H1 (cell line): ENCODE measurements at regions of chr2 and their contacts with region 1.

Region 1: DNA sequence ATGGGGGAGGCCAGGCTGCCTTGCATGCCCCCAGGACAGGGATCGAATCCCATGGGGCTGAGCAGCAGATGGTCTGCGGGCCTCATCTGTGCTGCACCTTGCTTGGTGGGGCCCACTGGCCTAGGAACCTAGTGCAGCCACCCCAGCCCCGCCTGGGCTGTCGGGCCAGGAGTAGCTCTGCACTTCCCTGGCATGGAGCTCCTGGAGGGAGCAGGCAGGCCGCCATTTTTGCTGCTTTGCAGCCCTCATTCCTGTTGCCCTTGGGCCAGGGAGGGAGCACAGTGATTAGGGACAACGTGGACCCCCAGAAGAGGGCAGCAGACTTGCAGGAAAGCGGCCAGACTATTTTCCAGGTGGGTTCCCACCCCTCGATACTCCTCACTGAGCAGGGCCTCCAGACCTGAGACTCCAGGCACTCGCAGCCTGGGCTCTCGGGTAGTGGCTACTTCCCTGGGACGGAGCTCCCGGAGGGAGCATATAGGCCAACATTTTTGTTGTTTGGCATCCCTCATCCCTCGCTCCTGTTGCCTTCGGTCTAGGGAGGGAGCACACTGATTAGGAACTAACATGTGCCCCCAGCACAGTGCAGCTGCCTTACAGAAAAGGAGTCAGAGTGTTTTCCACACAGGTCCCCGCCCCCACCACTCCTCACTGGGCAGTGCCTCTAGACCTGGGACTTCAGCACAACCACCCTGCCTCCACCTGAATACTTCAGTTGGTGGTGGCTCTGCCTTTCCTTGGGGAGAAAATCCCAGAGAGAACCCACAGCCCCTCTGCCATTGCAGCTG is 99.5 kb downstream of the MAIP1 start:
- DNase-seq: peak; percentile 59 to 83
- H3K4me3 ChIP-seq: no peak overlapping the region
- H3K27ac ChIP-seq: no peak overlapping the region
- H3K4me1 ChIP-seq: peaks cover 0 to 8% (median 0%) of the 10 kb centered on the region in 4 experiments; a peak in 1 of 7 replicates
- H3K27me3 ChIP-seq: no peaks in the 10 kb centered on the region; a peak in 1 of 7 replicates
- CTCF ChIP-seq: peak; percentile 70 to 81 (median 75)
- EP300 ChIP-seq: no peak
- POLR2A ChIP-seq: no peak
- RAD21 ChIP-seq: peak; percentile 92 to 93

Region 2: DNA sequence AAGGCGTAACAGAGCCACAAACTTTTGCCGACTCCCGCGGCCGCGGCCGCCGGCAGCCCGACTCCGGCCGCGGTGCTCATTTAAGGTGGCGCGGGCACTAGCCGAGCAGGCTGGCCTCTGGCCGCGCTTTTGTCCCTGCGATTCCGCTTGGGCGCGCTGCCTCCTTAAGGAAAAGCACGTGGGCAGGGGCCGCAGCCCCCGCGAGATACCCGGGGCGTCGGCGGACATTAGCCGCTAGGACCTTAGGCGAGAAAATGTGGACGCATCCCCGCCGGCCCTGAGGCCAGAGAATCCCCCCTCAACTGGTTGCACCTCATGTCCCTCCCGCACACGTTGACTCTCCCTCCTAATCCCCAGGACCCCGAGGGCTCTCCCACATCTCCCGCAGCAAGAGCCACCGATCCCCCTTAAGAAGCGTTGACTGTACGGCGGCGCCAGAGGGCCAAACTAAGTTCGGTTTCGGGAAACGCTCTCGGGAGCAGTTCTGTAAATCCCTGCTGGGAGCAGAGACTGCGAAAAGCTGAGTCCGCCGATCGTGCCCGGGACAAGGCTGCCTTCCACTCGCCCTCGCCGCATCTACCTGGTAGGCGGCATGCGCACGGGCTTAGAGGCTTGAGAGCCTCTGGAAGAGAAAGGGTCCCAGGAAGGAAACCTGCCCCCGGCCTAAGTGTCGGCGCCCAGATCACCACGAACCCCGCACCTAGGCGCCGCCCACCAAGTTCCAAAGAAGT is 595.4 kb before region 1 on chr2:
- CTCF ChIA-PET with region 1: no interaction called
- POLR2A ChIA-PET with region 1: no interaction called
- DNase-seq: peak; percentile 82 to 92
- H3K4me3 ChIP-seq: peak overlapping the region; percentile 60 to 73 (median 64)
- H3K27ac ChIP-seq: no peak overlapping the region
- H3K4me1 ChIP-seq: peaks cover 0 to 26% (median 10%) of the 10 kb centered on the region in 4 experiments; a peak in 6 of 7 replicates
- H3K27me3 ChIP-seq: peaks cover 21 to 76% (median 52%) of the 10 kb centered on the region in 4 experiments; a peak in 6 of 7 replicates
- CTCF ChIP-seq: no peak
- EP300 ChIP-seq: no peak
- POLR2A ChIP-seq: no peak; a peak in 1 of 3 replicates
- RAD21 ChIP-seq: no peak; a peak in 1 of 4 replicates

Region 3: GRCh38 chr2:200028998-200029397 is 25.9 kb before region 1 on chr2:
- CTCF ChIA-PET with region 1: no interaction called
- POLR2A ChIA-PET with region 1: no interaction called
- DNase-seq: no peak
- H3K4me3 ChIP-seq: no peak overlapping the region
- H3K27ac ChIP-seq: no peak overlapping the region
- H3K4me1 ChIP-seq: no peaks in the 10 kb centered on the region
- H3K27me3 ChIP-seq: no peaks in the 10 kb centered on the region
- CTCF ChIP-seq: no peak
- EP300 ChIP-seq: no peak
- POLR2A ChIP-seq: no peak
- RAD21 ChIP-seq: no peak

Region 4: DNA sequence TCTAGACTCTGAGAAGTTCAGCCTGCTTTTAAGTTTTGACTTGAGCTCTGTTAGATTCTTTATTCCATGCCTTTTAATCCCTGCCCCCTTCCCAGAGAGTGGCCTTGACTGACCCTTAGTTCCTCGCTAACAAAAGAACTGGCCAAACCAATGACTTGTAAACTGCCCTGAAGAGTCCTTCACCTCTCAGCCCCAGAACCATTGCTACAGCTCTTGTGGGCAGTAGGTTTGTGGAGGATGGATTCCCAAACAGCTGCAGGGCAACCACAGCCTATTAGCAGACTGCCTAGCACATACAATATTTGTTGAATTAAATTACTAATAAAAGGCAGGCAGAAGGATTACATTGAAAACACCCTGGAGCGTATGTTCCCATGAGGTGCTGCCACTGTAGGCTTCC is 64.4 kb after region 1 on chr2:
- CTCF ChIA-PET with region 1: no interaction called
- POLR2A ChIA-PET with region 1: no interaction called
- DNase-seq: no peak
- H3K4me3 ChIP-seq: no peak overlapping the region
- H3K27ac ChIP-seq: no peak overlapping the region
- H3K4me1 ChIP-seq: no peaks in the 10 kb centered on the region
- H3K27me3 ChIP-seq: no peaks in the 10 kb centered on the region
- CTCF ChIP-seq: no peak
- EP300 ChIP-seq: no peak
- POLR2A ChIP-seq: no peak
- RAD21 ChIP-seq: no peak

Region 5: DNA sequence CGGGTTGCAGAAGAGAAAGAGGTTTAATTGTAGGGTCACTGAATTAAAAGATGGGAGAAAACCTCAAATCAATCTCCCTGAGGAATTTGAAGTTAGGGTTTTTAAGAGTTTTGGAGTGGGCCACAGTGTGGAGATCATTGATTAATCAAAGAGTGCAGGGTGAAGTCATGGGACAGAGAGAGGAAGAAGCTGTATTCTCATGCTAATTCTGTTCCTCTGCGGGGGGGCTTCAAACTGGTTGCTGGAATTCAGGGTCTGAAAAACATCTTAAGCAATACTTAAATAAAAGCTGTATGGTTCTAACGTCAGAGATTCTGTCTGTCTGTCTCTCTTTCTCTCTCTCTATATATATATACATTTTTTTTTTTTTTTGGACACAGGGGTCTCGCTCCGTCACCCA is 81.8 kb after region 1 on chr2:
- CTCF ChIA-PET with region 1: interaction called, 10 read pairs
- POLR2A ChIA-PET with region 1: no interaction called
- DNase-seq: peak in 1 of 2 experiments; percentile 70
- H3K4me3 ChIP-seq: peak overlapping the region in 1 of 4 experiments; percentile 14; a peak in 1 of 8 replicates
- H3K27ac ChIP-seq: 0 out of 2 replicates have a peak overlapping the region, but pooled peaks have one; percentile 40
- H3K4me1 ChIP-seq: peaks cover 0 to 7% (median 4%) of the 10 kb centered on the region in 4 experiments; a peak in 4 of 7 replicates
- H3K27me3 ChIP-seq: no peaks in the 10 kb centered on the region
- CTCF ChIP-seq: no peak
- EP300 ChIP-seq: no peak
- POLR2A ChIP-seq: no peak
- RAD21 ChIP-seq: no peak

Region 6: DNA sequence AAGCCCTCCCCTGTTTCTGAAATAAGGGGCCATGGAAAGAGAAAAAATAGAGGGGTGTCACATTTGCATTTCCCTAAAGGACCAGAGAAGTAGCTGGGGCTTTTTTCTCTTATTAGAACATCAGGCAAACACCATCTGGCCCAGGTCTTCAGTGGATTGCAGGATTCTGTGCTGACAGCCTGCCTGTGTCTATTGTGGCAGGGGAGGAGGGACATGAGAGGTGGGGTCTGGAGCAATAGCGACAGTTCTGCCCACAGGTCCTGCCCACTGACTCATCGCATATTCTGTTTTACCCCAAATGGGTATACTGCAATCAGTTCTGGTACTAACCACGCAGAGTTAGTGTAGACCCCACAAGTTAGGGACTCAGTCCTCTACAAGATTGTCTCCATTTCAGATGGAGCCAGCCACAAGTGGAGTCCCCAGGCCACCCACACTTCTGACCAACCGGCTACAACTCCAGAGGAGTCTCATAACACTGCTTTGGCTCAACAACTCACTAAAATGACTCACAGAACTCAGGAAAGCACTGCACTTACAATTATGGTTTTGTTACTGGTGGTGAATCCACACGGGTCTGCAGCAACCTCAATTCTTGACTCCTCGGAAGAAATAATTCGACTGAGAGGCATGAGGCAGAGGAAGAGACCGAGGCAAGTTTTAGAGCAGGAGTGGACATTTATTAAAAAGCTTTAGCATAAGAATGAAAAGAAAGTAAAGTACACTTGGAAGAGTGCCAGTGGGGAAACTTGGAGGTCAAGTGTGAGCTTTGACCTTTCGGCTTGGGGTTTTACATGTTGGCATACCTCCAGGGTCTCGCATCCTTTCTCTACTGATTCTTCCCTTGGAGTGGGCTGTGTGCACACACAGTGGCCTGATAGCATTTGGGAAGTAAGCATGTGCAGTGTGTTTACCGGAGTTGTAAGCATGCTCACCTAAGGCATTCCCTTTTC is 105.2 kb after region 1 on chr2:
- CTCF ChIA-PET with region 1: no interaction called
- POLR2A ChIA-PET with region 1: no interaction called
- DNase-seq: no peak
- H3K4me3 ChIP-seq: no peak overlapping the region
- H3K27ac ChIP-seq: no peak overlapping the region
- H3K4me1 ChIP-seq: peaks cover 0 to 16% (median 4%) of the 10 kb centered on the region in 4 experiments; a peak in 3 of 7 replicates
- H3K27me3 ChIP-seq: no peaks in the 10 kb centered on the region
- CTCF ChIP-seq: no peak
- EP300 ChIP-seq: no peak
- POLR2A ChIP-seq: no peak
- RAD21 ChIP-seq: no peak

Region 7: DNA sequence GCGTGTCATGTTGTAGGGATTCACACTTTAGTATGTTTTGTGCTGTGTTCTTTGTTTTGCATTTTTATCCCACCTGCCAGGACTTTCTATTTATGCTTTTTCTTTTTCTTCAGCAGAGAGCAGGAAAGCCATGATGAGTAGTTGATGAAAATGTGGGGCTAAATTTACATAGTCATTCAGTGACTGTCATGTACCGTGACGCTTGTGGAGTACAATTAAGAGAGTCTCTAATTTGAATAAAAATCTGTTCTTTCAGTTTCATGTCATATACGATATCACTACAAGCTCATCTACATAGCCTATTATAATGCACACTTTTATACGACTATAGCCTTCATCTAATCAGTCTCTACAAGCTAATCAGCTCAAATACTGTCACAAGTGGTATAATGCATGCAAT is 138.9 kb after region 1 on chr2:
- CTCF ChIA-PET with region 1: interaction called, 10 read pairs
- POLR2A ChIA-PET with region 1: interaction called, 3 read pairs
- DNase-seq: no peak
- H3K4me3 ChIP-seq: no peak overlapping the region
- H3K27ac ChIP-seq: no peak overlapping the region
- H3K4me1 ChIP-seq: peaks cover 0 to 6% (median 3%) of the 10 kb centered on the region in 4 experiments; a peak in 2 of 7 replicates
- H3K27me3 ChIP-seq: no peaks in the 10 kb centered on the region
- CTCF ChIP-seq: no peak
- EP300 ChIP-seq: no peak
- POLR2A ChIP-seq: no peak
- RAD21 ChIP-seq: no peak